Activated CD4-positive, alpha-beta T cell treated with anti-CD3 and anti-CD28 coated beads, Interleukin-2, amount 10 ng/mL, durations not matched to agents 7 days and 5 days (primary cell): ENCODE measurements at regions of chr20 and their contacts with region 1.

Region 1: GRCh38 chr20:31723319-31724078 is 831 bp upstream of the BCL2L1 start:
- DNase-seq: peak; percentile 97
- H3K4me3 Mint-ChIP-seq: peak overlapping the region; percentile 85
- H3K27ac Mint-ChIP-seq: peak overlapping the region; percentile 98
- H3K4me1 Mint-ChIP-seq: peaks cover 28% of the 10 kb centered on the region
- H3K27me3 Mint-ChIP-seq: no peaks in the 10 kb centered on the region

Region 2: GRCh38 chr20:31605031-31605901 is 118.2 kb before region 1 on chr20 and contains the start of gene ID1:
- CTCF ChIA-PET with region 1: interaction called, 16 read pairs
- POLR2A ChIA-PET with region 1: no interaction called
- DNase-seq: peak; percentile 92
- H3K4me3 Mint-ChIP-seq: peak within 1 kb of the TSS; percentile 84
- H3K27ac Mint-ChIP-seq: peak within 1 kb of the TSS; percentile 61
- H3K4me1 Mint-ChIP-seq: peaks cover 29% of the 10 kb centered on the region
- H3K27me3 Mint-ChIP-seq: peaks cover 46% of the 10 kb centered on the region
- total RNA-seq, gene ID1: 0.85 to 1.4 TPM

Region 3: GRCh38 chr20:31638317-31638716 is 85.2 kb before region 1 on chr20:
- CTCF ChIA-PET with region 1: interaction called, 58 read pairs
- POLR2A ChIA-PET with region 1: interaction called, 3 read pairs
- DNase-seq: no peak
- H3K4me3 Mint-ChIP-seq: no peak overlapping the region
- H3K27ac Mint-ChIP-seq: no peak overlapping the region
- H3K4me1 Mint-ChIP-seq: peaks cover 19% of the 10 kb centered on the region
- H3K27me3 Mint-ChIP-seq: peaks cover 19% of the 10 kb centered on the region

Region 4: DNA sequence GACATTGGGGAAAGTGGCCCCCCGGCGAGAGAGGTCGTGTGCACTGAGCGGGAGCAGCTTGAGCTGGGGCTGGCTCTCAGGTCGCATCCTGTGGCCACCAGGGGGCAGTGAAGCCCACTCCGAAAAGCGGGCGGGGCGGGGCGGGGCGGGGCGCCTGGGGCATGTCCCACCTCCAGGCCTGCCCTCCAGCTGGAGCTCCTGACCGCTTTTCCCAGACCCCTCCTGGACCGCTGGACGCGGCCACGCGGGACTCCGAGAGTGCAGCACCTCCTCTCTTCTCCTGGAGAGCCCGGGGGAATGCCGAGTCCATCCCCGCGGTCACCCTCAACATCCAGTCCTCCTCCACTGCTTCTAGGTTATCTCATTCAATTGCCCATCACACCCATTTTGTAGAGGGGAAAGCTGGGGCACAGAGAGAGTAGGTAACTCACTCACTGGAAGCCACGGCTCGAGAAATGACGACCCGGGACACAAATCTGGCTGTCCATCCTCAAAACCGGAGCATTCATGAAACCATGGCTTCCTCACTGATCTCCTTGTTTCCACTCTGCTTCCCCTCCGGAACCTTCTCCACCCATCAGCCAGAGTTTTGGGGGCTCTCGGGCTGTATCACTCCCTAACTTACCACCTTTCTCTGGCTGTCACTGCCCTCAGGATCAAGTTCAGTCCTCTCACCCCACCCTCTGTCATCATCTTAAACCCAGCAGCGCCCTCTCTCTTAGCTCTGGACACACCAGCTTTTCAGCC is 61.7 kb before region 1 on chr20:
- CTCF ChIA-PET with region 1: interaction called, 219 read pairs
- POLR2A ChIA-PET with region 1: interaction called, 25 read pairs
- DNase-seq: peak; percentile 79
- H3K4me3 Mint-ChIP-seq: peak overlapping the region; percentile 63
- H3K27ac Mint-ChIP-seq: peak overlapping the region; percentile 88
- H3K4me1 Mint-ChIP-seq: peaks cover 52% of the 10 kb centered on the region
- H3K27me3 Mint-ChIP-seq: no peaks in the 10 kb centered on the region

Region 5: GRCh38 chr20:31684153-31685015 is 39.1 kb before region 1 on chr20:
- CTCF ChIA-PET with region 1: interaction called, 13 read pairs
- POLR2A ChIA-PET with region 1: no interaction called
- DNase-seq: peak; percentile 28
- H3K4me3 Mint-ChIP-seq: no peak overlapping the region
- H3K27ac Mint-ChIP-seq: peak overlapping the region; percentile 84
- H3K4me1 Mint-ChIP-seq: peaks cover 84% of the 10 kb centered on the region
- H3K27me3 Mint-ChIP-seq: no peaks in the 10 kb centered on the region

Region 6: DNA sequence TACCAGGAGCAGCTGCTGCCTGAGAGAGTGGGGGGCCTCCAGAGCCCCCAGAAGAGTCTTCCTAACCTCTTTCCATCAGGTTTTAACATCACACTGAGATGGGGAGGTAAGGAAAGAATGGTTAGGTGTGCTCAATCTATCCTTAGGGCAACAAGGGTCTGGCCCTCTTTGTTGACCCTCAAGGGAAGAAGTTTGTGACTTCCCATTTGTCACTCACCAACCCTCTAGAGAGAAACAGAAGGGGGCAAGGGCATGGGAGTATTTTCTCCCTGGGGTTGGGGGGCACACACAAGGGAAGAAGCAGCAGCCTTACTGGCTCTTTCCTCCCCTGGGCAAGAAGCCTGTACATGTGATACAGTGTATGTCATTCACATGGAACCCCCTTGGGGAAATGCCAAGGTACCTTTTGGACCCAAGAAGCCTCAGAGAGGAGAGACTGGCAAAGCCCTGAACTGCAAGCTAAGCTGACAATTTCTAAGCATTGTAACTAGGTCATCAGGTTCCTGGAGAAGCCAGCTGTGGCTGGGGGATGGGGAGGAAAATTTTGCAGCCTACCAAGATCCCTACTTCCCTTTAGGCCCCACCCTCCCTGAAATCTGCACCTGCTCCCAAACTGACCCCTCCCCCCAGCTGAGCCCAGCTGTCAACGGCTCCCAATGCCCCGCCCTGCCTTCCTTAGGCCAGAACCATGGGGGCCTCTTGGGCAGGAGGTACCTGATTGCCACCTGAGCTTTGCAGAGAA is 15.3 kb before region 1 on chr20:
- CTCF ChIA-PET with region 1: interaction called, 15 read pairs
- POLR2A ChIA-PET with region 1: no interaction called
- DNase-seq: no peak
- H3K4me3 Mint-ChIP-seq: no peak overlapping the region
- H3K27ac Mint-ChIP-seq: no peak overlapping the region
- H3K4me1 Mint-ChIP-seq: peaks cover 72% of the 10 kb centered on the region
- H3K27me3 Mint-ChIP-seq: no peaks in the 10 kb centered on the region

Region 7: GRCh38 chr20:32052090-32052777 is 328.7 kb after region 1 on chr20 and contains the start of gene HCK:
- CTCF ChIA-PET with region 1: no interaction called
- POLR2A ChIA-PET with region 1: no interaction called
- DNase-seq: no peak
- H3K4me3 Mint-ChIP-seq: peak within 1 kb of the TSS; percentile 12
- H3K27ac Mint-ChIP-seq: no peak within 1 kb of the TSS
- H3K4me1 Mint-ChIP-seq: peaks cover 19% of the 10 kb centered on the region
- H3K27me3 Mint-ChIP-seq: peaks cover 61% of the 10 kb centered on the region
- total RNA-seq, gene HCK: not detected